T-cell (primary cell): ENCODE measurements at regions of chr15 and their contacts with region 1.

Region 1: GRCh38 chr15:70535071-70535954 is 228.0 kb downstream of the UACA start:
- DNase-seq: peak; percentile 47 to 79 (median 64)
- ATAC-seq: peak; percentile 84 to 89 (median 88)
- H3K4me3 ChIP-seq: peak overlapping the region; percentile 55 to 81
- H3K4me3 Mint-ChIP-seq: peak overlapping the region; percentile 73 to 93 (median 75)
- H3K27ac ChIP-seq: peak overlapping the region; percentile 66
- H3K27ac Mint-ChIP-seq: peak overlapping the region; percentile 81 to 90
- H3K4me1 ChIP-seq: peaks cover 21 to 56% of the 10 kb centered on the region in 2 experiments
- H3K4me1 Mint-ChIP-seq: peaks cover 70 to 83% (median 79%) of the 10 kb centered on the region in 3 donors
- H3K27me3 ChIP-seq: no peaks in the 10 kb centered on the region
- H3K27me3 Mint-ChIP-seq: no peaks in the 10 kb centered on the region

Region 2: GRCh38 chr15:70519616-70520015 is 15.7 kb before region 1 on chr15:
- CTCF ChIA-PET with region 1: no interaction called
- POLR2A ChIA-PET with region 1: no interaction called
- DNase-seq: no peak
- ATAC-seq: no peak
- H3K4me3 ChIP-seq: no peak overlapping the region
- H3K4me3 Mint-ChIP-seq: no peak overlapping the region
- H3K27ac ChIP-seq: no peak overlapping the region
- H3K27ac Mint-ChIP-seq: no peak overlapping the region
- H3K4me1 ChIP-seq: peaks cover 0 to 2% of the 10 kb centered on the region in 2 experiments
- H3K4me1 Mint-ChIP-seq: peaks cover 7 to 11% (median 7%) of the 10 kb centered on the region in 3 donors
- H3K27me3 ChIP-seq: peaks cover 0 to 7% of the 10 kb centered on the region in 2 experiments
- H3K27me3 Mint-ChIP-seq: no peaks in the 10 kb centered on the region

Region 3: DNA sequence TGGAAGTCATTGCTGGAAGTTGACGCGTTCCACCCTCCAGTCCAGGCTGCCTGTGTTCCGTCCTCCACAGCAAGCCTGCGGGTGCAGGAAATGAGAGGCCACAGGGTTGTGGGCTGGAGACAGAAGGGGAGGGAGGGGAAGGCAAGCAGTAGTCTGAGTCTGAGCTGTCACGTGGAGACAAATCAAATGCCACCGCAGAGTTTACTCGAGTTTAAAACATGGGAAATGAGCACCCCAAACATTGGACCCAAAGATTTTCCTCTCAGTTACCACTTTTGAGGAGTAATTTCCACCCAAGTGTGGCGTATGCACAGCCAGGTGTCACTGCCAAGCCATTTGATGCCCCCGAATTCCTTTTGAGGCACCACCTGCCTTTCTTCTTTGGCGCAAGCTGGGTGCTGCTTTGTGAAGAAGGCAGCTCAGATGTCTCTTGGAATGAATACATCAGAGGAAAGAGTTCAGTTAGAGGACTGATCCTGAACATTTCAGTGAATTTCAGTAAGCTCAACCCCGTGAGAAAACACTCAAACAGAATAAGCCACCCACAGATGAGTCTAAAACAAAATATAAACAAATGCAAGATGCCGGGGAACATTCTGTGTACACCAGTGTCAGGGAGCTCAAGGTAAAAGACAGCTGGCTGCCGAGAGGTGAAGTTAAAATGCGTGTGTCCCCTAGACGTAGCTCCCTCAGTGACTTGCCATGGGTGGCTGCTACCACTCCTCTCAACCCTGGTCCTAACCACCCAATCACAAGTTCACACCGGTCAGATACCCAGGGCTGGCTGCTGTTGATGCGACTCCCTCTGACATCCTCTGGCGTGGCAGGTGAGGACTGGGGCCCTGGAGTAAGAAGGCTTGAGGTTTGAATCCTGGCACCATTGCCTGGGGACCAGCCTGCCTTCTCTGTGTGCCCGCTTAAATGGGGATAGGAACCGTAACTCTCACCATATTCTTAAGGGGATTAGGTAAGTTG is 24.2 kb after region 1 on chr15:
- CTCF ChIA-PET with region 1: interaction called in 1 of 2 experiments, 11 read pairs
- POLR2A ChIA-PET with region 1: interaction called, 3 to 4 read pairs
- DNase-seq: peak; percentile 53 to 80 (median 67)
- ATAC-seq: peak; percentile 93 to 96 (median 95)
- H3K4me3 ChIP-seq: peak overlapping the region; percentile 60 to 94
- H3K4me3 Mint-ChIP-seq: peak overlapping the region in 1 of 3 donors; percentile 26
- H3K27ac ChIP-seq: no peak overlapping the region
- H3K27ac Mint-ChIP-seq: no peak overlapping the region
- H3K4me1 ChIP-seq: peaks cover 44 to 71% of the 10 kb centered on the region in 2 experiments
- H3K4me1 Mint-ChIP-seq: peaks cover 0 to 6% (median 5%) of the 10 kb centered on the region in 3 donors
- H3K27me3 ChIP-seq: peaks cover 0 to 15% of the 10 kb centered on the region in 2 experiments
- H3K27me3 Mint-ChIP-seq: peaks cover 0 to 2% of the 10 kb centered on the region in 2 donors